Cardiac septum (tissue), 1 donor: ENCODE measurements at regions of chr1 and their contacts with region 1.

Region 1: GRCh38 chr1:165592945-165593823 is 37.9 kb upstream of the MGST3 start:
- DNase-seq: no peak

Region 2: DNA sequence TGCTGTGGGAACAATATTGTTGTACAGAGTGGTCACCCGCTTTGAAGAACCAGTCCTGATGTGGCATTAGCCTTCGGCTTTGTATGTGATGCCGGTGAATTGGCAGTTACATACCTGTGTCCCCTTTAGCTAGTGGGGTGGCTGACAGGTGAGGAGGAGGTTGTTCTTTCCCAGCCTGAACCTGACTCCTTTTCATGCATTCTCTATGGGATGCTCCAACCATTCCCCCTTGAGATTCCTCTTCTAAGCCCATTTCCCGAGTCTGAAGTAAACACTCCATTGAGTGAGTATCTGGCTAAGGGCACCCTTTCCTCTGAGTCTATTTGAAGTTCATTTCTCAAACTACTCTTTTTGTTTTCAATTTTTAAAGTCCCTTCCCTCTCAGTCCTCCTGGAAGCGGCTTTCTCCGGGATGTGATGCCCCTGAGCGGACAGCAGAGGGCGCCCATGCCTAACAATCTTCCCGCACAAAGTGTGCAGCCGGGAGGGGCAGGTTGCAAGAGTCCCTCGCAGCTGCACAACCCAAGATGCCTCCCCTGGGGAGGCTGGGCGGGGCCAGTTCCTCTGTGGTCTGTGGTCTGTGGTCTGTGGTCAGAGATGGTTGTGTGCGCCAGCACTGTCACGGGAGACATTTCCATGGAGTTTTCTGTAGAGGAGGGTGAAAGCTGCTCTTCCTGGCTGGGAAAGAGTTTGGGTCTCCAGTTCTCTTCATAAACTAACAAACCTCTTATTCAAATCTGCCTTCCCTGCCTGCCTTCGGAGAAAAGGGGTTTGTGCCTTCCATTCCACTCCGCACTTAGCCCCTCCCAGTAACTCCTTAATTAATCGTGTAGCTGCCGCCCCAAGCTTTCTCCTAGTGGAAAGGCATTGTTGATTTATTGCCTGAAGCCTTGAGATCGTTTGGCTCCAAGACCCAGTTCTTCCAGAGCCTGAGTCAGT is 200.3 kb before region 1 on chr1:
- intact Hi-C with region 1: loop called (anchors 2 kb)
- DNase-seq: peak; percentile 90

Region 3: DNA sequence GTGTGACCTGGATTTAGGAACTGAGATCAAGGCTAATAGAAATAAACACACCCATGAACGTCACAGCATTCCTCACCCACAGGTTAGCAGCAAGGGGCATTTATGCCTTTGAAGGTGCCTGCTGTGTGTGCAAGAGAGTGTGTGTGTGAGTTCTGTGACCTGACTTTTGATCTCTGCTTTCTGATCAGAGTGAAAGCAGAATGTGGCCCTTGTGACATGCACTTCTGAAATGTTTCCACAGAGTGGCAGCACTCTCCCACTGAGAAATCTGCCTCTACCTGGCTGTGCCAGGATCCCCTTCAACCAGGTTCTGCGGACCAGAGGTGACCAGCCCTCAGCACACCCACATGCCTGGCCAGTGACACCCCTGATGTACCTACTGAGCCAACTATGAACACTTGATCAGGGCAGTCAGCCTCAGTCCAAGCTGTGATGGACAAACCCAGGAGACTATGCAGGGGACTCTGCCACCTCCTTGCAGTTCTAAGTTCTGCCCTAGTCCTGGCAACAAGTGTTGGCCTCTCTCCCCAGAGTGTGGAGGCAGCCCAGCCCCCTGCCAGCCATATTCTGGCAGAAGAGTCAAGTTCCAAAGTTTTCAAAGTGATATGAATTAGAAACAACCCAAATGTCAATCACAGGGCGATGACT is 189.2 kb before region 1 on chr1:
- intact Hi-C with region 1: loop called (anchors 1 kb)
- DNase-seq: no peak

Region 4: GRCh38 chr1:165444897-165445370 is 148.2 kb before region 1 on chr1 and contains the start of gene RXRG:
- intact Hi-C with region 1: no loop called
- DNase-seq: no peak
- total RNA-seq, gene RXRG: 5.1 TPM

Region 5: GRCh38 chr1:165549973-165550372 is 43.2 kb before region 1 on chr1:
- intact Hi-C with region 1: loop called (anchors 5 kb)
- DNase-seq: no peak